ENCODE measurements at regions of chr9 and their contacts with region 1.

Region 1: GRCh38 chr9:137223078-137223970 is 1.3 kb upstream of the RNF208 start:
- DNase-seq: peak; percentile 98
- H3K4me3 Mint-ChIP-seq: peak overlapping the region; percentile 84
- H3K27ac Mint-ChIP-seq: peak overlapping the region; percentile 78
- H3K4me1 Mint-ChIP-seq: peaks cover 5% of the 10 kb centered on the region
- H3K27me3 Mint-ChIP-seq: no peaks in the 10 kb centered on the region

Region 2: DNA sequence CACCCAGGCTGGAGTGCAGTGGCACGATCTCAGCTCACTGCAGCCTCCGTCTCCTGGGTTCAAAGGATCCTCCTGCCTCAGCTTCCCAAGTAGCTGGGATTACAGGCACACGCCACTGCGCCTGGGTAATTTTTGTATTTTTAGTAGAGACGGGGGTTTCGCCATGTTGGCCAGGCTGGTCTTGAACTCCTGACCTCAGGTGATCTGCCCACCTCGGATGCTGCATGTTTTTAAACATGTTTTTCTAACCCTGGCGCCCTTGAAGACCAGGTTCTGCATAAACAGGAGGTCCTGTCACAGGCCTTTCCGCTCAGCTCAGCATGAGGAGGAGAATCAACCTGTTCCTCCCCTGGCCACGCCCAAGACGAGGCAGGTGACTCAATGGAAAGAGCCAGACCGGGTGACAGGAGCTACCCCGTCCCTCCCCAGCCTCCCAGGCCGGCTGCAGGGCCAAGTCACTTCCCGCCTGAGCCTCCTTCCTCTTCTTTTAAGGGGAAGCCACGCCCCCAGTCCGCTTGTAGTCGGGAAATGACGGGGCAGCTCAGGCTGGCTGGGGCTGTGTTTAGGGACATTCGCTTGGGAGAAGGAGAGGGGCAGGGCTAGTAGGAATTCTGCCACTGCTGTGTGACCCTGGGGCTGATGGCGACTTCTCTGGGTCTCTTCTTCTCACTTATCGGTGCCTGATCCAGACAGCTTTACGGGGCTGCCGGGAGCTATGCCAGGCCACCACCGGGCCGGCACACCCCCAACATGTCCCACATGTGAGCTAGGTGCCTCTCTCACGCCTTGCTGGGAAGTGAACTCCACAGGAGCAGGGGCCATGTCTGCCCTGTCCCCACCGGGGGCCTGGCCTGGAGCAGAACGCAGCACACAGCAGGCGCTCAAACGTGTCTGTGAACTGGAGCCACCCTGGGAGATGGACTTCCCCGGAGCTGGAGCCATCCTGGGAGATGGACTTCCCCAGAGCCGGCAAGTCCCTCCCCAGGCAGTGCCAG is 683.6 kb before region 1 on chr9:
- intact Hi-C with region 1: loop called (anchors 2 kb)
- DNase-seq: peak; percentile 91
- H3K4me3 Mint-ChIP-seq: peak overlapping the region; percentile 93
- H3K27ac Mint-ChIP-seq: peak overlapping the region; percentile 100
- H3K4me1 Mint-ChIP-seq: peaks cover 34% of the 10 kb centered on the region
- H3K27me3 Mint-ChIP-seq: no peaks in the 10 kb centered on the region

Region 3: GRCh38 chr9:136865735-136866103 is 357.6 kb before region 1 on chr9:
- intact Hi-C with region 1: loop called (anchors 1 kb)
- DNase-seq: no peak
- H3K4me3 Mint-ChIP-seq: peak overlapping the region; percentile 89
- H3K27ac Mint-ChIP-seq: peak overlapping the region; percentile 82
- H3K4me1 Mint-ChIP-seq: peaks cover 10% of the 10 kb centered on the region
- H3K27me3 Mint-ChIP-seq: no peaks in the 10 kb centered on the region

Region 4: DNA sequence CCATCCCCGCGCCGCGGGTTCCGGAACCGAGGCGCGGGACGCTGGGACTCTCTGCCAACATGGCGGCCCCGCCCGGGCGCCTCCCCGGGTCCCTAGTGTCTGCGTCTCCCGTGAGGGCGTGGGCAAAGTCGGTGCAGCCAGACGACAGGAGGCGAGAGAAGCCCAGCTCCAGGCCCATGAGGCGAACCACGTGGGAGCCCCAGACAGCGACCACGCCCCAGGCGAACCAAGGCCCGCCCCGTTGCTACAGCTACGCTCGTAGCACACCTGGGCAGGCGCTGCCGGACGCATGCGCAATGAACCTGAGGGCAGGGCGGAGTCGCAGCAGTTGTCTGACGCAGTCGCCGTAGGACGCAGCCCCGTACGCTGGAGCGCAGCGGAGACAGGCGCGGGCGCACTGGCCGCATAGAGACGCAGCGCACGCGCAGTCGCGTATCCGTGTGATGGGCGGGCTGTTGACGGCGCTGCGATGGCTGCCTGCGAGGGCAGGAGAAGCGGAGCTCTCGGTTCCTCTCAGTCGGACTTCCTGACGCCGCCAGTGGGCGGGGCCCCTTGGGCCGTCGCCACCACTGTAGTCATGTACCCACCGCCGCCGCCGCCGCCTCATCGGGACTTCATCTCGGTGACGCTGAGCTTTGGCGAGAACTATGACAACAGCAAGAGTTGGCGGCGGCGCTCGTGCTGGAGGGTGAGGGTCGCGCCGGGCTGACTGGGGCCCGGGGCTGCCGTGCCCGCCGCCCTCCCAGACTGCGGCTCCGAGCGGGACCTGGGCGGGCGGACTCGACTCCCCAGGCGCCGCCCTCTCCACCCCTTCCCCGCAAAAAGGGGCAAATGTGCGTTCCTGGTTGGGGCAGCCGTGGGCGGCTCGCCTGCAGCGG is 136.6 kb before region 1 on chr9 and contains the start of gene MAN1B1:
- intact Hi-C with region 1: loop called (anchors 1 kb)
- DNase-seq: peak; percentile 100
- H3K4me3 Mint-ChIP-seq: peak within 1 kb of the TSS; percentile 88
- H3K27ac Mint-ChIP-seq: peak within 1 kb of the TSS; percentile 94
- H3K4me1 Mint-ChIP-seq: peaks cover 33% of the 10 kb centered on the region
- H3K27me3 Mint-ChIP-seq: no peaks in the 10 kb centered on the region
- total RNA-seq, gene MAN1B1: 48.1 and 53.6 TPM in 2 replicates

Region 5: GRCh38 chr9:137129456-137130175 is 93.7 kb before region 1 on chr9:
- intact Hi-C with region 1: loop called (anchors 1 kb)
- DNase-seq: peak; percentile 91
- H3K4me3 Mint-ChIP-seq: peak overlapping the region; percentile 90
- H3K27ac Mint-ChIP-seq: peak overlapping the region; percentile 79
- H3K4me1 Mint-ChIP-seq: peaks cover 24% of the 10 kb centered on the region
- H3K27me3 Mint-ChIP-seq: peaks cover 5% of the 10 kb centered on the region

Region 6: DNA sequence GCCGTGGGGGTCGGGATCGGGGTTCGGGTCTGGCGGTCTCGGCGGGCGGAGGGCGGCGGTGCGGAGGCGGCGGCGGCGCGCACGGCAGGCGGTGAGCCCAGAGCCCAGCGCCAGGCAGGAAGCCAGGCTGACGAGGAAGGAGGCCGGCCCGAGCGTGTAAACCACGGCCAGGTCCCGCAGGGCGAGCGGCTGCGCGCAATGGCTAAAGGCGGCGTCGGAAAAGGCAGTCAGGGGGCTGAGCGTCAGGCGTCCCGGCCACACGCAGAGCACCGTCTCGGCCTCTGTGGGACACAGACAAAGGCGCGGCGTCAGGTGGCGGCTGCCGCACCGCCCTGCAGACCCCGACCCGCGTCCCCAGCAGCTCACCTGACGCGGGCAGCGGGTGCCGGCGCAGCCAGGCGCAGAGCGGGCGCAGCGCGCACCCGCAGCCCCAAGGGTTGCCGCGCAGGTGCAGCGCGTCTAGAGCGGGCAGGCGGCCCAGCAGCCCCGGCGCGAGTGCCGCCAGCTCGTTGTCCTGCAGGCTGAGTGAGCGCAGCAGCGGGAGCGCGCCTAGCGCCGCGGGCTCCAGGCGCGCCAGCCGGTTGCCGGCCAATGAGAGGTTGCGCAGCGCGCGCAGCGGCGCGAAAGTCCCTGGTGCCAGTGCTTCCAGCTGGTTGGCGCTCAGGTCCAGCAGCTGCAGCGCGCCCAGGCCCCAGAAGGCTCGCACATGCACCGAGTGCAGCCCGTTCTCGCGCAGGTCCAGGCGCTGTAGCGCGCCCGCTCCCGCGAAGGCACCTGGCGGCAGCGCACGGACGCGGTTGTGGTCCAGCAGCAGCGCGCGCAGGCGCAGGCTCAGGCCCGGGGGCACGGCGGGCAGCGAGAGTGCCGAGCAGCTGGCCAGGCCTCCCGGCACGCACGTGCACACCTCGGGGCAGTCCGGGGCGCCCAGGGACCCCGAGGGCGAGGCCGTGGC is 54.1 kb before region 1 on chr9:
- intact Hi-C with region 1: no loop called
- DNase-seq: no peak
- H3K4me3 Mint-ChIP-seq: no peak overlapping the region
- H3K27ac Mint-ChIP-seq: no peak overlapping the region
- H3K4me1 Mint-ChIP-seq: no peaks in the 10 kb centered on the region
- H3K27me3 Mint-ChIP-seq: peaks cover 30% of the 10 kb centered on the region

Region 7: GRCh38 chr9:137188490-137189296 is 34.6 kb before region 1 on chr9 and contains the starts of genes ANAPC2 and SSNA1:
- intact Hi-C with region 1: loop called (anchors 1 kb)
- DNase-seq: peak; percentile 94
- H3K4me3 Mint-ChIP-seq: peak within 1 kb of the TSS; percentile 97
- H3K27ac Mint-ChIP-seq: peak within 1 kb of the TSS; percentile 87
- H3K4me1 Mint-ChIP-seq: peaks cover 24% of the 10 kb centered on the region
- H3K27me3 Mint-ChIP-seq: peaks cover 4% of the 10 kb centered on the region
- total RNA-seq, gene ANAPC2: 62.5 and 63.6 TPM in 2 replicates
- total RNA-seq, gene SSNA1: 101 and 105 TPM in 2 replicates

Region 8: DNA sequence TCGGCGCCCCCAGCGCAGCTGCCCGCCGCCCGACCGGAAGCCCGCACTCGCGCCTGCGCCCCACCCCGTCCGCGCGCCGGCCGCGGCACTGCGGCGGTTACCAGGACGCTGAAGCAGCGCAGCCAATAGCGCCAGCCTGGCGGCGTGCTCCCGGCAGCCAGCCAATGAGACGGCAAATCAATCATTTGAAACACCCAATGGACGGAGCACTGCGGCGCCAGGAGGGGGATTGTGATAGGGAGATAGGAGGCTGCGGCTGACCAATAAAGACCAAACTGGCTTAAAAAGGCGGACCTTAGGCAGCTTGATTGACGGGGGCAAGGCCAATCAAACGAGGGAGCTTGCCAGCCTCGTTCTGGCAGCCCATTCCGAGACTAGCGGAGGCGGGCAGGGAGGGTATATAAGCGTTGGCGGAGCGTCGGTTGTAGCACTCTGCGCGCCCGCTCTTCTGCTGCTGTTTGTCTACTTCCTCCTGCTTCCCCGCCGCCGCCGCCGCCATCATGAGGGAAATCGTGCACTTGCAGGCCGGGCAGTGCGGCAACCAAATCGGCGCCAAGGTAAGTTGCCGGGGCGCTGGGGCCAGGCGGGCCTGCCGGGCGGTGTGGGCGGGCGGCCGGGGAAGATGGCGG is 17.7 kb after region 1 on chr9 and contains the start of gene TUBB4B:
- intact Hi-C with region 1: loop called (anchors 1 kb)
- DNase-seq: peak; percentile 98
- H3K4me3 Mint-ChIP-seq: peak within 1 kb of the TSS; percentile 92
- H3K27ac Mint-ChIP-seq: peak within 1 kb of the TSS; percentile 91
- H3K4me1 Mint-ChIP-seq: peaks cover 22% of the 10 kb centered on the region
- H3K27me3 Mint-ChIP-seq: no peaks in the 10 kb centered on the region
- total RNA-seq, gene TUBB4B: 277 and 280 TPM in 2 replicates

Measured in activated T-helper 1 cell treated with anti-CD3 and anti-CD28 coated beads, Interleukin-12 subunit alpha, Interleukin-12 subunit beta, Interleukin-2, Interleukin-4 antibody, amounts not matched to agents 30 ng/mL and 10 ng/mL and 1 ng/mL, durations not matched to agents 14 hours and 24 hours and 36 hours (primary cell).